ENCODE measurements at regions of chr6 and their contacts with region 1.

Region 1: GRCh38 chr6:16514249-16514648 is 247.0 kb downstream of the ATXN1 start:
- DNase-seq: peak in 5 of 14 experiments; percentile 7 to 67 (median 59)
- ATAC-seq: peak; percentile 58
- H3K4me3 ChIP-seq: no peak overlapping the region
- H3K4me3 Mint-ChIP-seq: peak overlapping the region; percentile 5
- H3K27ac ChIP-seq: no peak overlapping the region
- H3K27ac Mint-ChIP-seq: peak overlapping the region; percentile 73
- H3K4me1 ChIP-seq: peaks cover 32% of the 10 kb centered on the region
- H3K4me1 Mint-ChIP-seq: peaks cover 54% of the 10 kb centered on the region
- H3K27me3 ChIP-seq: no peaks in the 10 kb centered on the region
- H3K27me3 Mint-ChIP-seq: no peaks in the 10 kb centered on the region
- CTCF ChIP-seq: peak; percentile 44

Region 2: DNA sequence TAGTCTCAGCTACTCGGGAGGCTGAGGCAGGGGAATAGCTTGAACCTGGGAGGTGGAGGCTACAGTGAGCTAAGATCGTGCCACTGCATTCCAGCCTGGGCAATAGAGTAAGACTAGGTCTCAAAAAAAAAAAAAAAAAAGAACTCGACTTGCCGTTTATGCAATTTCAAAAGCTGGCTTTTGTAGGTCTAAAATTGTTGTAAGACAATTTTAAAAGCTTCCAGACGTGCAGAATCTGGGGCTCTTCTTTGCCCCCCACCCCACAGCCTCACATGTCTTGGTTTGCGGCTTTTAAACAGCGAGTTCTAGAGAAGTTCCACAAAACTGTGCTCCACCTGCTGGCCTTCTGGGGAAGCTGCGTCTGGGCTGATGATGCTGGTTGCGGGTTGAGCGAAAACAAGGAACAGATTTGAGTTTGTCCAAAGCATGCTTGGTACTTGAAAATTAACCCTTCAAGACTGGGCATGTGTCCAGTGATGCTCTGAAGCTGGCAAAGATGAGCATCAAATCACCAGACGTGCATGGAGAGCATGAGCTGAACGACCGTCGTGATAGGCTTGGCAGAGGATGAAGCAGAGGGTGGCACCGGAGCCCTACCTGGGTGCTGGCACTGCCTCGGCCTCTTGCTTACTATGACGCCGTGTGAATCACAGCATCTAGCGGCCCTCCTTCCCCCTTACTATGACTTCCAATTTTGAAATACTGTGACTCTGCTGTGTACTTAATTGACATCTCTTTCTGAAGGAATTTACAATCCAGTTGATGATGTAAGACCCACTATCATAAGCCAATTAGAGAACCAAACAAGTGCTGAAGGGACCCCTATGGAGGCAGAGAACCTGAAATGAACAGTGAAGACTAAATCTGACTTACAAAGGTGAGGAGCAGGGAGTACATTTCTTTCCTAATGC is 104.5 kb before region 1 on chr6:
- CTCF ChIA-PET with region 1: interaction called, 7 read pairs
- POLR2A ChIA-PET with region 1: no interaction called
- intact Hi-C with region 1: loop called in 1 of 2 experiments (anchors 5 kb)
- DNase-seq: peak in 13 of 14 experiments; percentile 25 to 77 (median 50)
- ATAC-seq: peak; percentile 59
- H3K4me3 ChIP-seq: no peak overlapping the region
- H3K4me3 Mint-ChIP-seq: peak overlapping the region; percentile 1
- H3K27ac ChIP-seq: no peak overlapping the region
- H3K27ac Mint-ChIP-seq: peak overlapping the region; percentile 42
- H3K4me1 ChIP-seq: peaks cover 7% of the 10 kb centered on the region
- H3K4me1 Mint-ChIP-seq: peaks cover 36% of the 10 kb centered on the region
- H3K27me3 ChIP-seq: no peaks in the 10 kb centered on the region
- H3K27me3 Mint-ChIP-seq: no peaks in the 10 kb centered on the region
- CTCF ChIP-seq: peak; percentile 64

Region 3: GRCh38 chr6:16471222-16471909 is 42.9 kb before region 1 on chr6:
- CTCF ChIA-PET with region 1: interaction called, 4 read pairs
- POLR2A ChIA-PET with region 1: no interaction called
- intact Hi-C with region 1: loop called in 1 of 2 experiments (anchors 5 kb)
- DNase-seq: peak in 2 of 14 experiments; percentile 33 to 49
- ATAC-seq: no peak
- H3K4me3 ChIP-seq: no peak overlapping the region
- H3K4me3 Mint-ChIP-seq: no peak overlapping the region
- H3K27ac ChIP-seq: no peak overlapping the region
- H3K27ac Mint-ChIP-seq: peak overlapping the region; percentile 56
- H3K4me1 ChIP-seq: peaks cover 34% of the 10 kb centered on the region
- H3K4me1 Mint-ChIP-seq: peaks cover 67% of the 10 kb centered on the region
- H3K27me3 ChIP-seq: no peaks in the 10 kb centered on the region
- H3K27me3 Mint-ChIP-seq: no peaks in the 10 kb centered on the region
- CTCF ChIP-seq: no peak

Region 4: GRCh38 chr6:16481697-16482399 is 32.4 kb before region 1 on chr6:
- CTCF ChIA-PET with region 1: interaction called, 11 read pairs
- POLR2A ChIA-PET with region 1: interaction called, 4 read pairs
- intact Hi-C with region 1: no loop called
- DNase-seq: peak; percentile 24 to 93 (median 52)
- ATAC-seq: peak; percentile 82
- H3K4me3 ChIP-seq: no peak overlapping the region
- H3K4me3 Mint-ChIP-seq: peak overlapping the region; percentile 21
- H3K27ac ChIP-seq: peak overlapping the region; percentile 71 to 75
- H3K27ac Mint-ChIP-seq: peak overlapping the region; percentile 88
- H3K4me1 ChIP-seq: peaks cover 60% of the 10 kb centered on the region
- H3K4me1 Mint-ChIP-seq: peaks cover 73% of the 10 kb centered on the region
- H3K27me3 ChIP-seq: no peaks in the 10 kb centered on the region
- H3K27me3 Mint-ChIP-seq: no peaks in the 10 kb centered on the region
- CTCF ChIP-seq: no peak

Region 5: DNA sequence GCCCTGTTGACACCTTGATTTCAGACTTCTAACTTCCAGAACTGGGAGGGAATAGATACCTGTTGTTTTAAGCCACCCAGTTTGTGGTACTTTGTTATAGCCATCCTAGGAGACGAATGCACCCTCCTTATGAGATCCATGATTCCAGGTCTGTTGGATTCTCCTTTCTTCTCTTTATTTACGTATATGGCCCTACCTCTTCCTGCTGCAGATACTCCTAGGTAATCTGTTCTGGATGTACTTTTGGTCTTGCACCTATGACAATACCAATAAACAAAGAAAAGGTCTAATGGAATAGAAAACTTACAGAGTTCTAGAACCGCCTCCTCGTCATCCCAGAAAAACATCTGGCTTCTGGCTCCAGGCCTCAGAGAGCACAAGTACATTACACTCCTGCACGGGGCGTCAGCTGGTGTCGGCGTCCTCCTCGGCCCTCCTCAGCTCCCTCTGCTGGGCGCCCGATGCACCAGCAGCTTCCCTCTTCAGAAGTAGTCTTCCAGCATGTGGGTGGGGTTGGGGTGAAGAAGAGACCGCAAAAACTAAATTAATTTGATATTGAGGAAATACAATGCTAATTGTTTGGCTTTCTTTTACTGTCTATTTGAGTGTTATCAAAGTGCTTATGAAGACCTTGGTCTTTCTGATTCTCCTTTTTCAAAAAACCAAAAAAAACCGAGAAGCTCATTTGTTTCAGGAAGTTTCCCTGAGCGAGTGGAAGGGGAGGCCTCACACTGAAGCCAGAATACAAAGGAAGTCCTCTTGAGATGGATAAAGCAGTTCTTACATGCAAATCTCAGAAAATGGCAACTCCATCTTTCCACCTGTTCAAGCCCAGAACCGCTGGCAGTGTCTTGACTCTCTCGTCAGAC is 256.7 kb after region 1 on chr6:
- CTCF ChIA-PET with region 1: interaction called, 5 read pairs
- POLR2A ChIA-PET with region 1: interaction called, 3 read pairs
- intact Hi-C with region 1: loop called in 1 of 2 experiments (anchors 2 kb)
- DNase-seq: peak; percentile 65 to 90 (median 73)
- ATAC-seq: peak; percentile 79
- H3K4me3 ChIP-seq: no peak overlapping the region
- H3K4me3 Mint-ChIP-seq: no peak overlapping the region
- H3K27ac ChIP-seq: no peak overlapping the region
- H3K27ac Mint-ChIP-seq: peak overlapping the region; percentile 40
- H3K4me1 ChIP-seq: peaks cover 20% of the 10 kb centered on the region
- H3K4me1 Mint-ChIP-seq: peaks cover 45% of the 10 kb centered on the region
- H3K27me3 ChIP-seq: no peaks in the 10 kb centered on the region
- H3K27me3 Mint-ChIP-seq: no peaks in the 10 kb centered on the region
- CTCF ChIP-seq: peak; percentile 96

Region 6: GRCh38 chr6:16964553-16965501 is 450.6 kb after region 1 on chr6:
- CTCF ChIA-PET with region 1: no interaction called
- POLR2A ChIA-PET with region 1: no interaction called
- intact Hi-C with region 1: loop called in 1 of 2 experiments (anchors 5 kb)
- DNase-seq: peak; percentile 28 to 77 (median 47)
- ATAC-seq: peak; percentile 94
- H3K4me3 ChIP-seq: no peak overlapping the region
- H3K4me3 Mint-ChIP-seq: no peak overlapping the region
- H3K27ac ChIP-seq: no peak overlapping the region
- H3K27ac Mint-ChIP-seq: no peak overlapping the region
- H3K4me1 ChIP-seq: peaks cover 5% of the 10 kb centered on the region
- H3K4me1 Mint-ChIP-seq: peaks cover 5% of the 10 kb centered on the region
- H3K27me3 ChIP-seq: peaks cover 3 to 5% of the 10 kb centered on the region in 2 experiments
- H3K27me3 Mint-ChIP-seq: peaks cover 7% of the 10 kb centered on the region
- CTCF ChIP-seq: peak; percentile 66